Activated naive CD4-positive, alpha-beta T cell treated with anti-CD3 and anti-CD28 coated beads for 36 hours (primary cell): ENCODE measurements at regions of chr1 and their contacts with region 1.

Region 1: DNA sequence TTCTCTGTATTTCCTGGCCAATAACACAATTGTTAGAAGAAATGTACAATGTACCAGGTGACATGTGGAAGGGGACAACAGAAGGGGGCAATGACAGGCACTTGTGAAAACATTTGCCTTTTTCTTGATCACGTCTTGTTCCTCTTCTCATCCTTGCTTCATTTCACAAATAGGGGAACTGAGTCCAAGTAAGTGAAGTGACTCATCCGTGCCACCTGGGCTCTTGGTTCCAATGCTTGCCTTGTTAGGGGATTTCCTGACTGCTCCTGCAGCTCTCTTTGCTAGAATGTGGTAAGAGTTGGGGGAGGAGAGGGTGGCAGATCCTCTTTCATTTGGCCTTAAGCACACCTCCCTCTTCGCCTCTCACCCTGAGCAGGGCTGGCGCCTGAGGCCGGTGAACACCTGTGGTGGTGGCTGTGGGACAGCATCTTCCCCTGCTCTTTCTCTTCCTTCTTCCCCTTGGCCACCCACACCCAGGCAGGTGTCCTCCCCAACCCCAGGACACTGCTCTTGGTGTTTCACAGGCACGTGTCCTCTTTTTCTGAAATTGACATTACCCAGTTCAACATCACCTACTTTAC is 2.2 kb upstream of the RHEX start:
- DNase-seq: peak; percentile 87
- H3K4me3 Mint-ChIP-seq: no peak overlapping the region
- H3K27ac Mint-ChIP-seq: peak overlapping the region; percentile 60
- H3K4me1 Mint-ChIP-seq: peaks cover 47% of the 10 kb centered on the region
- H3K27me3 Mint-ChIP-seq: peaks cover 11% of the 10 kb centered on the region

Region 2: GRCh38 chr1:205056188-205056611 is 994.5 kb before region 1 on chr1:
- CTCF ChIA-PET with region 1: no interaction called
- intact Hi-C with region 1: no loop called
- DNase-seq: no peak
- H3K4me3 Mint-ChIP-seq: no peak overlapping the region
- H3K27ac Mint-ChIP-seq: no peak overlapping the region
- H3K4me1 Mint-ChIP-seq: no peaks in the 10 kb centered on the region
- H3K27me3 Mint-ChIP-seq: no peaks in the 10 kb centered on the region

Region 3: DNA sequence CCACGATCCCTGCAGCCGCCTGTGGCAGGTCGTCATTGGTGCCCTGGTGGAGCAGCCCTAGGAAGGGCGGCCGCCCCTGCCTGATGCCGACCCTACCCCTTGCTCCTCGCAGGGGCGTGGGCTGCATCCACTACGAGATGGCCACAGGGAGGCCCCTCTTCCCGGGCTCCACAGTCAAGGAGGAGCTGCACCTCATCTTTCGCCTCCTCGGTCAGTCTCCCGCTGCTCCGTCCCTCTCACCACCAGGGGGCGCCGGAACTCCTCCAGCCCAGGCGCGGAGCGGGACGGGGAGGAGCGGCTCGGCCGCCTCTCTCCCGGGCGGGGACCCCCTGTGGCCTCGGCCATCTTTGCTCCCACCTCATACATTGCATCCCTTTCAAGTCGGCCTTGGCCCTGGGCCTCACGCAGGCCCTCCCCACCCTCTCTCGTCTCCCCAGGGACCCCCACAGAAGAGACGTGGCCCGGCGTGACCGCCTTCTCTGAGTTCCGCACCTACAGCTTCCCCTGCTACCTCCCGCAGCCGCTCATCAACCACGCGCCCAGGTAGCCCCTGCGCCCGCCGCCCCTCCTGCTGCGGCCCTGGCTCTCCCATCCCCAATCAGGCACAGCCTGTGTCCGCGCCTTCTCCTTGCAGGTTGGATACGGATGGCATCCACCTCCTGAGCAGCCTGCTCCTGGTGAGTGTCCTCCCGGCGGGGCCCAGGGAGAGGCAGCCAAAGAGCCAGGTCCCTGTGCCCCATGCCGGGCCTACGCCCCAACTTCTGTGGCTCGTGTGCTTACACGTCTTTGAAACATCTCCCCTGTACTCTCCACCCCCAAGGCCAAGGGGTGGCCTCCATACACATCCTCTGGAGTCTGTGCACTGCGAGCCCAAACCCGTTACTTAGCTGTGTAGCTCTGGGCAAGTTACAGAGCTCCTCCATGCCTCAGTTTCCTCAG is 521.6 kb before region 1 on chr1:
- CTCF ChIA-PET with region 1: no interaction called
- intact Hi-C with region 1: no loop called
- DNase-seq: peak; percentile 87
- H3K4me3 Mint-ChIP-seq: peak overlapping the region; percentile 36
- H3K27ac Mint-ChIP-seq: no peak overlapping the region
- H3K4me1 Mint-ChIP-seq: no peaks in the 10 kb centered on the region
- H3K27me3 Mint-ChIP-seq: no peaks in the 10 kb centered on the region

Region 4: GRCh38 chr1:206001476-206001888 is 49.3 kb before region 1 on chr1:
- CTCF ChIA-PET with region 1: no interaction called
- intact Hi-C with region 1: loop called (anchors 1 kb)
- DNase-seq: peak; percentile 60
- H3K4me3 Mint-ChIP-seq: no peak overlapping the region
- H3K27ac Mint-ChIP-seq: no peak overlapping the region
- H3K4me1 Mint-ChIP-seq: peaks cover 22% of the 10 kb centered on the region
- H3K27me3 Mint-ChIP-seq: peaks cover 5% of the 10 kb centered on the region

Region 5: DNA sequence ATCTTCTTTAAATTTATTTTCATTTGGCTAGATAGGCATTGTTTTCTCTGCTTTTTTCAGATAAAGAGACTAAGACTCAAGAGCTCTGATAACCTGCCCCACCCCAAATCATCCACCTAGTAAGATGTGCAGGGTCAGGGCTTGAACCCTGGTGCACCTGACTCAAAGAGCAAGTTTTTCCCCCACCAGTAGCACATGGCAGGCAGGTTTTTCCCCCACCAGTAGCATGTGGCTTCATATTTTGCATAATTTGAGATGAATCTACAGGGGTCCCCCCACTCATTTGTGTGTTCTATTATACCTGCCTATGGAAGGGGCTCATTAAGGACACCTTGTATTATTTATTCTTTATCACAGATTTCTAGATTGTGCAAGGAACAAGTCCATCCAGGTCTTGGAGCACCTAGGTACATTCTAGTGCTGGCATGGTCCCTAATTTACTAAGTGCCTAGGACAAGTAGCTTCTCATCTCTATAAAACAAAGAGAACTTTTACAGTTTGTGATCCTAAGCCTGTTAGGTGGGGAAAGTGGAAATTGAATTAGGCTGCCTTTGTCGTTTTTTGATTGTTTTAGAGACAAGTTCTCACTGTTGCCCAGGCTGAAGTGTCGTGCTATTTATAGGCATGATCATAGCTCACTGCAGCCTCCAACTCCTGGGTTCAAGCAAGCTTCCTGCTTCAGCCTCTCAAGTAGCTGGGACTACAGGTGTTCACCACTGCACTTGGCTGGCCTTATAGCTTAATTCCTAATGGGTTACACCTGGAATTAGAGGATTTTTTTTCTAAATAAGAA is 13.9 kb before region 1 on chr1:
- CTCF ChIA-PET with region 1: interaction called, 5 read pairs
- intact Hi-C with region 1: loop called (anchors 1 kb)
- DNase-seq: peak; percentile 37
- H3K4me3 Mint-ChIP-seq: no peak overlapping the region
- H3K27ac Mint-ChIP-seq: no peak overlapping the region
- H3K4me1 Mint-ChIP-seq: peaks cover 18% of the 10 kb centered on the region
- H3K27me3 Mint-ChIP-seq: peaks cover 12% of the 10 kb centered on the region

Region 6: GRCh38 chr1:206066479-206067171 is 15.9 kb after region 1 on chr1:
- CTCF ChIA-PET with region 1: interaction called, 5 read pairs
- intact Hi-C with region 1: loop called (anchors 2 kb)
- DNase-seq: peak; percentile 28
- H3K4me3 Mint-ChIP-seq: no peak overlapping the region
- H3K27ac Mint-ChIP-seq: no peak overlapping the region
- H3K4me1 Mint-ChIP-seq: peaks cover 16% of the 10 kb centered on the region
- H3K27me3 Mint-ChIP-seq: peaks cover 7% of the 10 kb centered on the region